ENCODE measurements at regions of chr3 and their contacts with region 1.

Region 1: DNA sequence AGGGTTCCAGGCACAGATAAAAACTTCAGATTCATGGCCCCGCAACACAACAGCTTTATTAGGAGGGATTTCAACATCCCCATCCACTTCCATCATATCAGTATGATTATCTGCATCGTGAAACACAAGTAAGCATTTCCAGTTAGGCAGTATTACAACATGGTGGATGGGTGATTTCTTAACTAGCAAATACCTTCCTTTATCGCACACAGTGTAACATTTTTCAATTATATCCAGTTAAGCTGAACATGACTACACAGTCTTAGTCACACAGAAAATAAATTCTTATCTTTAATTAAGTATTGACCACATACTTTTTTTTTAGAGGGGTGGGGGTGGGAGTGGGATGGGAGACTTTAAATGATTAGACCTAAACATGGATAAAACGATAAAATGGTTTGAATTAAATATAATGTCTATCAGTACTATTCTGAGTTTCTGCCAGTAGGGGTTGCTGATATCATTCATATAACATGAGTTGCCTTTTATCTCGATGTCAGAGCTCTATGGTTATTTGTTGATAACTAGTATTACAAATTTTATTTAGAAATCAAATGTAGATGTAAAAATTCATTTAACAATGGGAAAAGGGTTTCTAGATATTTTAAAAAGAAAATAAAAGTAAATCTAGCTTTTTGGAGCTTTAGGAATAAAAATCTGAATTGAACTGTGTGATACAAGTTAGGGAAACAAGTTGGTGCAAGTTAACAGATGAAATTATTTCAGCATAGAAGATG is 146.6 kb downstream of the TBL1XR1 start:
- DNase-seq: peak in 1 of 2 experiments; percentile 59
- H3K4me3 ChIP-seq: no peak overlapping the region
- H3K27ac ChIP-seq: peak overlapping the region; percentile 40
- H3K4me1 ChIP-seq: peaks cover 15% of the 10 kb centered on the region
- H3K27me3 ChIP-seq: no peaks in the 10 kb centered on the region
- CTCF ChIP-seq: peak; percentile 90

Region 2: DNA sequence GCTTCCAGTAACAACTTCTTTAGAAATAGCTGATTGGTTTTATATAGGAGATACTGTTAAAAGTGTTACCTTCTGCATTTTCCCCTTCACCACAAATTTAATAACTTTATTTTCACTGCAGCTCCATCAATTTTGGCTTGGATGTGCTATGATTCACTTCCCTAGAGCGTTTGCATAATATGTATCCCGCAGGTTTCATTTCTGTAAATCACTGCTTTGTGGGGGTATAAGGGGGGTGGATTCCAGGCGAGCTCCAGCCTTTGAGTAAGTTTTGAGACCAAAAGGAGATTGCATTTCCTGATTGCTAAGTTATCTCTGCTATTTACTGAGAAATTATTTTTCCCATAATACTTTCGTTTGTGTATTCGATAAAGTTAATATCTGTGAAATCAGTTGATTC is 86.0 kb before region 1 on chr3:
- CTCF ChIA-PET with region 1: no interaction called
- POLR2A ChIA-PET with region 1: no interaction called
- intact Hi-C with region 1: no loop called
- DNase-seq: no peak
- H3K4me3 ChIP-seq: no peak overlapping the region
- H3K27ac ChIP-seq: no peak overlapping the region
- H3K4me1 ChIP-seq: peaks cover 9% of the 10 kb centered on the region
- H3K27me3 ChIP-seq: no peaks in the 10 kb centered on the region
- CTCF ChIP-seq: no peak

Region 3: DNA sequence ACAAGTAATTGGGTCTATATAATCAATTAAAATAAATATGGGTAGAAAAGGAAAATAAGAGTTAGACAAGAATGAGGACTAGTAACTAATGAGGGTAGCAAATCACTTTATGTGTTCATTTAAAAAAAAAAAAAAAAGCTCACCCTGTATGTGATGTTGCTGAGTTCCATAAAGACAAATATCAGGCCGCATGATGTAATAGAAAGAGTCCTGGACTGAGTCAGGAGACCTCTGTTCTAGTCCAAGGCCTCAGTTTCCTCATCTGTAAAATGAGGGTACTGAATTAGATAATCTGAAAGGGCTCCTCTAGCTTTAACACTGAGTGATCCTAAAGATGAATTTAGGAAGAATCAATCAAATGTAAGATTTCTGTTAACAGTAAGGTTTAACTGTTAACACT is 29.0 kb after region 1 on chr3:
- CTCF ChIA-PET with region 1: no interaction called
- POLR2A ChIA-PET with region 1: no interaction called
- intact Hi-C with region 1: no loop called
- DNase-seq: no peak
- H3K4me3 ChIP-seq: no peak overlapping the region
- H3K27ac ChIP-seq: no peak overlapping the region
- H3K4me1 ChIP-seq: no peaks in the 10 kb centered on the region
- H3K27me3 ChIP-seq: no peaks in the 10 kb centered on the region
- CTCF ChIP-seq: no peak

Region 4: DNA sequence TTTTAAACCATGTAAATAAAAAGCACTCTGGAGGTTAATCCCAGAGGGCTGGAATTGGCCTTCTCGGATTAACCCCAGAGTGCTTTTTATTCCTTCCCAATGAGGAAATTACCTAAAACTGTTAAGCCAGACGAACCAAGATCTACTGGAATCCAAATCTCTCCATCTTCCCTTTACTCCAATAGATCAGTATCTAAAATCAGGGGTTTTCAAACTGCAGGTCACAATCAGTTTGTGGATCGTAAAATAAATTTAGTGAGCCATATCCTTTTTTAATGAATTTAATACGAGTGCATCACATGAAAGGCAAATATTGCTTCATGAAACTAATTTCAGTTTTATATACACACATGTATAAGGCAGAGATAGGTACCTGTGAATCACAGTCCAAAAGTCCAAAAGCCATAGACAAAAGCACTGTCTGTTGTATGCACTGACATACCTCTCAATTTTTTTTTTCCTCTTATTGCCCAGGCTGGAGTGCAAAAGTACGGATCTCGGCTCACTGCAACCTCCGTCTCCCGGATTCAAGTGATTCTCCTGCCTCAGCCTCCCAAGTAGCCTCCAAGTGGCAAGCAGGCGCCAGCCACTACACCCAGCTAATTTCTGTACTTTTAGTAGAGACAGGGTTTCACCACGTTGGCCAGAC is 85.3 kb after region 1 on chr3:
- CTCF ChIA-PET with region 1: no interaction called
- POLR2A ChIA-PET with region 1: no interaction called
- intact Hi-C with region 1: no loop called
- DNase-seq: no peak
- H3K4me3 ChIP-seq: no peak overlapping the region
- H3K27ac ChIP-seq: no peak overlapping the region
- H3K4me1 ChIP-seq: no peaks in the 10 kb centered on the region
- H3K27me3 ChIP-seq: no peaks in the 10 kb centered on the region
- CTCF ChIP-seq: no peak

Region 5: DNA sequence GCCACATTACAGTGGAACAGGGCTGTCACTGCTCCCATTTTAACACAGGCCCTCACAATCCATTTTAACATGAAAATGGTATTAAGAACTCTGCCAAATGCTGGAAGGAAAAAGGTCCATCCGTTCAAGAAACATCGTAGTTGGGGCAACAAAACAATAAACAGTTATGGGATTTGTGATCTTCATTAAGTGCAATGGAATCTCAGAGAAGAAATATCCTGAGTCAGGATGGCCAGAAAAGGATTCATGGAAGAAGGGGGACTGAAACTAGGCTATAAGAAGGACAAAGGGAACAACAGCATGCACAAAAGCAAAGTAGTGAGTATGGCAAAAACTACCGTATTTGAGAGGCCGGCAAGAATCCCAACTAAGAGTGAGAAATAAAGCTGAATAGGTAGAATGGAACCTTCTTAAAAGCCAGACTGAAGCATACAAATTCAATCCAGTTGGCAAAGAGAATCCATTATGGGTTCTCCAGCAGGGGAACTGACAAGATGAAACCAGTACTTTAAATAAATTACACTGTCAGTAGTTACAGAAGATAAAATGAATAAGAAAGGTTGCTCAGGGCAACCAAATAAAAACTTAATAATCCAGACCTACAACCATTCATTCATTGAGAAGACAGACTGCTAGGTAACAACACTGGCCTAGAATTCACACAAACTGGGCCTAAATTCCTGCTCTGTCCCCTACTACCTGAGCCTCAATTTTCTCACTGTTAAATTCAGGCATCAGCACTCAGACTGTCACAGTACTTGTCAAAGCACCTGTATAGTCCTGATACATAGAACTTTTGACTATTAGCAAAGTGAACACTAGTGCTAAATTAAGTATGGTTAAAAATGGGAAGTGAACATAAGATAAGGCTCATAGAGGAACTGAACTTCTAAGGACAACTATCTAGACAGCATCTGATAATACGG is 140.3 kb after region 1 on chr3:
- CTCF ChIA-PET with region 1: no interaction called
- POLR2A ChIA-PET with region 1: interaction called, 26 read pairs
- intact Hi-C with region 1: no loop called
- DNase-seq: no peak
- H3K4me3 ChIP-seq: no peak overlapping the region
- H3K27ac ChIP-seq: peak overlapping the region; percentile 31
- H3K4me1 ChIP-seq: peaks cover 32% of the 10 kb centered on the region
- H3K27me3 ChIP-seq: no peaks in the 10 kb centered on the region
- CTCF ChIP-seq: no peak

Region 6: DNA sequence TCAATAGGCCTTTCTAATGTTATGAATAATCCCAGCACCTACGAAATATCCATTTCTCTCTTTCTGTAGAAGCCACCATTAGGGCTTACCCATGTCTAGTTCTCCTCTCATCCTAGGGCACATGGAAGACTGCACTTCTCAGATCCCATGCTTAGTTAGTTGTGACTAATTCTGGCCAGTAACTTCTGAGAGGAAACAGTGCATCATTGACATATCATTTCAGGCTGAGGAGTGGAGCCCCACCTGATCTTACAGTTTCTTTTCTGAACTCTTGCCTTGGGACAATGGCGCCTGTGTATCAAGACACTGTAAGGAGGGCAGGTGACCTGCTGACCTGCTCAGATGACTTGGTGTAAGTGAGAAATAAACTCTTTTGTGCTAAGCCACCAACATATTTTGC is 186.0 kb after region 1 on chr3:
- CTCF ChIA-PET with region 1: no interaction called
- POLR2A ChIA-PET with region 1: no interaction called
- intact Hi-C with region 1: no loop called
- DNase-seq: no peak
- H3K4me3 ChIP-seq: no peak overlapping the region
- H3K27ac ChIP-seq: no peak overlapping the region
- H3K4me1 ChIP-seq: no peaks in the 10 kb centered on the region
- H3K27me3 ChIP-seq: no peaks in the 10 kb centered on the region
- CTCF ChIP-seq: no peak

Region 7: GRCh38 chr3:177345049-177345972 is 294.6 kb after region 1 on chr3:
- CTCF ChIA-PET with region 1: interaction called, 11 read pairs
- POLR2A ChIA-PET with region 1: no interaction called
- intact Hi-C with region 1: no loop called
- DNase-seq: peak; percentile 93 to 98
- H3K4me3 ChIP-seq: peak overlapping the region; percentile 6; the same call in 1 of the 2 replicates
- H3K27ac ChIP-seq: peak overlapping the region; percentile 87
- H3K4me1 ChIP-seq: peaks cover 28% of the 10 kb centered on the region
- H3K27me3 ChIP-seq: no peaks in the 10 kb centered on the region
- CTCF ChIP-seq: no peak

Region 8: DNA sequence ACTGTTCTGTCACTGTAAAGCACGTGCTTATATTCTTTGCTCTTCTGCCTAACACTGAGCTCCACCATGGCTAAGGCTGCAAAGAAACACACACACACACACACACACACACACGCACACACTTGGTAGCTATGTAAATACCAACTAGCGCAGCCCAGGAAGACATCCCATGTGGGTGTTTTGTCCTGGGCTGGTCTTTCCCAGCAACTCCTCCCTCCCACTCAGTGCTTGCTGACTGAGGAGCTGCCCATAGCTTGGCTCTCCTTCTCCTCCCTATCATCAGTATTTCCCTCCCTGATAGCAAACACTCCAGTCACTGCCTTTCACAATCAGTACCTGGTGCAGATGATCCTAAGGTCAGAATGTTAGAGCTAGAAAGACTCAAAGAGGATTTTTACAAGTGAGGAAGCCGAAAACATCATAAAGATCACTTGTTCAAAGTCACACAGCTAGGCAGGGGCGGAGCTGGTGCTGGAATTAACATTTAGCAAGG is 523.6 kb after region 1 on chr3:
- CTCF ChIA-PET with region 1: interaction called, 15 read pairs
- POLR2A ChIA-PET with region 1: no interaction called
- intact Hi-C with region 1: no loop called
- DNase-seq: no peak
- H3K4me3 ChIP-seq: no peak overlapping the region
- H3K27ac ChIP-seq: no peak overlapping the region
- H3K4me1 ChIP-seq: no peaks in the 10 kb centered on the region
- H3K27me3 ChIP-seq: no peaks in the 10 kb centered on the region
- CTCF ChIP-seq: no peak

Region 9: DNA sequence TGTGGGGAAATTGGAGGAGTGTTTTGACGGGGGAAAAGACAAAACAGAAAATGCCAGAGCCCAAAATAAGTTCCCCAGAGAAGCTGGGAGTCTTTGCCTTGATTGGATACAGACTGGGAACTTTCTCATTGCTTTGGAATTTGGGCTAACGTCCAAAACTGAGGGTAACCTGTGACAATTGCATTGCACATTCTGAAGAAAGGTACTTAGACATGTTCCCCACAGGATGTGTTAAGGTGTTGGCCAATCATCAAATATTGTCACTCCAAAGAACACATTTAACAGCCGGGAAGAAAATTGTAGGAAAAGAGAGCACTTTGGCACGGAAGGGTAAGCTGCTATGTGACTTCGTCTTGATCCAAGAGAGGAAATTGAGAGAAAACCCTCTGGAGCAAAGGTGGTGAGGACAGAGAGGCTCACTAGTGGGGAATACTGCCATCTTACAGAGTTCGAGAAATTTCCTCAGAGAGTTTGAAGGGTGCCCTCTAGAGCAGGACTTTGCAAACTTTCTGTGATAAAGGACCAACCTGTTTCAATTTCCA is 766.1 kb after region 1 on chr3:
- CTCF ChIA-PET with region 1: interaction called, 3 read pairs
- POLR2A ChIA-PET with region 1: no interaction called
- intact Hi-C with region 1: loop called (anchors 10 kb)
- DNase-seq: peak; percentile 75 to 97
- H3K4me3 ChIP-seq: 0 out of 2 replicates have a peak overlapping the region, but pooled peaks have one; percentile 1
- H3K27ac ChIP-seq: peak overlapping the region; percentile 76
- H3K4me1 ChIP-seq: peaks cover 40% of the 10 kb centered on the region
- H3K27me3 ChIP-seq: no peaks in the 10 kb centered on the region
- CTCF ChIP-seq: peak; percentile 46; the same call in 1 of the 2 replicates

Measured in PC-9 (cell line).